Activated naive CD4-positive, alpha-beta T cell treated with anti-CD3 and anti-CD28 coated beads for 36 hours (primary cell): ENCODE measurements at regions of chr3 and their contacts with region 1.

Region 1: GRCh38 chr3:129399145-129399894 is 29.1 kb downstream of the EFCAB12 start:
- DNase-seq: peak; percentile 87
- H3K4me3 Mint-ChIP-seq: peak overlapping the region; percentile 100
- H3K27ac Mint-ChIP-seq: peak overlapping the region; percentile 99
- H3K4me1 Mint-ChIP-seq: peaks cover 31% of the 10 kb centered on the region
- H3K27me3 Mint-ChIP-seq: no peaks in the 10 kb centered on the region

Region 2: GRCh38 chr3:129160891-129161859 is 238.1 kb before region 1 on chr3 and contains the start of gene ISY1:
- CTCF ChIA-PET with region 1: no interaction called
- intact Hi-C with region 1: loop called (anchors 1 kb)
- DNase-seq: peak; percentile 91
- H3K4me3 Mint-ChIP-seq: peak within 1 kb of the TSS; percentile 87
- H3K27ac Mint-ChIP-seq: peak within 1 kb of the TSS; percentile 99
- H3K4me1 Mint-ChIP-seq: peaks cover 31% of the 10 kb centered on the region
- H3K27me3 Mint-ChIP-seq: no peaks in the 10 kb centered on the region
- total RNA-seq, gene ISY1: 56.8 to 65.4 TPM

Region 3: DNA sequence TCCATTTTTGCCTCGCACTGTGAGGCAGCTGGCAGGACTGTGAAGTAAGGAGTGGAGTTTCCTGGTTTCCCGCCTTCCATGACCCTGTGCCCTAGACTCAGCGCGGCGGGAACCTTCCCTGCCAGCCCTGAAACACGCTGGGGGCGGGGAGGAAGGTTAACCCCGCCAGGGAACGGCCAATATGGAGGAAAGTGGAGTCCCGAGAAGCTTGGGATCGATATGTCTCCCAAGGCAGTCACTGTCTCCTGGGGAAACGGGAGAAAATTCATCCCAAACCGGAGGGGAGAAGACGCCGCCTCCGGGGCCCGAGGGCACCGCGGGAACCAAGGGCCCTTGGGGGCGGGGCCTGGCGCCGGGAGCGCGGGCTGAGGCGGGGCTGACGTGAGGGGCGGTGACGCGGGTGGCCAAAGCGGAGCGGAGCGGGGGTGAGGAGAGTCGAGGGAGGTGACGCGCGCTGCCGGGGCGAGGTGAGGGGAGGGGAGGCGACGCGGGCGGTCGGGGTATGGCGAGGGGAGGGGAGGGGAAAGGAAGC is 120.8 kb before region 1 on chr3 and contains the start of gene HMCES:
- CTCF ChIA-PET with region 1: no interaction called
- intact Hi-C with region 1: loop called (anchors 2 kb)
- DNase-seq: peak; percentile 96
- H3K4me3 Mint-ChIP-seq: peak within 1 kb of the TSS; percentile 87
- H3K27ac Mint-ChIP-seq: peak within 1 kb of the TSS; percentile 90
- H3K4me1 Mint-ChIP-seq: peaks cover 48% of the 10 kb centered on the region
- H3K27me3 Mint-ChIP-seq: no peaks in the 10 kb centered on the region
- total RNA-seq, gene HMCES: 35.0 to 35.8 TPM

Region 4: DNA sequence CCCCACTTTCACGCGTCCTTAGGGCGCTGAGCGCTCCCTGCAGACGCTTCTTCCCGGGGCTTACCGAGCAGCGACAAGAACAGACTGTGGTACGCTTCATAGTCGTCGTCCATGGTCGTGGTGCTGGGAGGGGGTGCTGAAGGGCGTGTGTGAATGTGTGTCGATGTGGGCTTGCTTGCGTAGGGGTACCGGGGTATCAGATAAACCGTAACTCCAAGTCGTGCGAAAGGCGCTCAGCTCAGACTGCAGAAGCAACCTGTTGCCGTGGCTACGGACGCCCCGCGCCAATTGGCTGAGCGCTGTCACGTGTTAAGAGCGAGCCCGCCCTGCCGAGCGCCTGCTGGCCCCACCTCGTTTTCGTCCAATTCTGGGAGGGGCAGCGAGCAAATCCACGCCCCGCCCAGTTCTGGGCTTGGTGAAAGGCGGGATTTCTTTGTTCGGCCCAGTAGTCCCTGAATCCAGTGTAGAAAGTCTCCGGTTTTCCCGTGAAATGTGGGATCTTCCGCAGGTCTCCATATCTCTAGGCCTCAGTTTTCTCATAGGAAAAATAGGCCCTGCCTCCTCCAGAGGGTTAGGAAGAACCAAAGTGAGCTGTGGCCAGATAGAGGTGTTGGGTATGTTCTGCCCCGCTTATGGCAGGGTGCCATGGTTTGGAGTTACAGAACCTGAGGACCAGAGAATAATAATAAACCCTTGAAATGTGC is 29.2 kb after region 1 on chr3 and contains the start of gene EFCAB12:
- CTCF ChIA-PET with region 1: interaction called, 7 read pairs
- intact Hi-C with region 1: loop called (anchors 1 kb)
- DNase-seq: peak; percentile 94
- H3K4me3 Mint-ChIP-seq: peak within 1 kb of the TSS; percentile 65
- H3K27ac Mint-ChIP-seq: peak within 1 kb of the TSS; percentile 71
- H3K4me1 Mint-ChIP-seq: peaks cover 45% of the 10 kb centered on the region
- H3K27me3 Mint-ChIP-seq: no peaks in the 10 kb centered on the region
- total RNA-seq, gene EFCAB12: 0.37 to 0.81 TPM

Region 5: GRCh38 chr3:129606636-129607390 is 207.5 kb after region 1 on chr3 and contains the start of gene PLXND1:
- CTCF ChIA-PET with region 1: no interaction called
- intact Hi-C with region 1: loop called (anchors 5 kb)
- DNase-seq: peak; percentile 27
- H3K4me3 Mint-ChIP-seq: peak within 1 kb of the TSS; percentile 77
- H3K27ac Mint-ChIP-seq: peak within 1 kb of the TSS; percentile 6
- H3K4me1 Mint-ChIP-seq: peaks cover 7% of the 10 kb centered on the region
- H3K27me3 Mint-ChIP-seq: peaks cover 19% of the 10 kb centered on the region
- total RNA-seq, gene PLXND1: 5.1 to 6.2 TPM

Region 6: DNA sequence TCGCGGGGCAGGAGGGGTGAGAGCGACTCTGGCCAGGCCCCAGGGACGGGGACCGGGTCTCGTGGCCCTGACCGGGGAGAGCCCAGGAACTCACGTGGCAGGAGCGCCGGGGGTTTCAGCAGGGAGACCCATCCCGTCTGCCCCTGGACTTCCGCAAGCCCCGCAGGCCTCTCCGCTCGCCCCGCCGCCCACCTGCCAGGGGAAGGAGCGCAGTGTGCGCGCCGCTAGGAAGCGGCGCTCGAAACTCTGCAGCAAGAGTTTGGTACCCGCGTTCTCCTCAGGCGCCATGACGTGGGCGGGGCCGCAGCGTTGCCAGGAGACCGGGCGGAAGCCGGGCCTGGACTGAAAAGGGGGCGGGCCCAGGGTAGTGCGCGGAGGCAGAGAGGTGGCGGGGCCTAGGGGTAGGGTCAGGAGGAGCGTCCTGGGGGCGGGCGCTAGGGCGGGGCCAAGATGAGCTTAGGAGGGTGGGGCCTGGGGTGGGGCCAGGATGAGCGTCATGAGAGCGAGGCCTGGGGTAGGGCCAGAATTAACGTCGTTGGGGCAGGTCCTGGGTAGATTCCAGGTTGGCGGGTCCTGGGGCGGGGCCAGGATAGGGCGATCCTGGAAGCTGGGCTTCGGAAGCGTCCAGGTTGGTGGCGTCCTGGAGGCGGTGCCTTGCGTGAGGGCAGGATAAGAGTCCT is 712.0 kb after region 1 on chr3:
- CTCF ChIA-PET with region 1: no interaction called
- intact Hi-C with region 1: loop called (anchors 1 kb)
- DNase-seq: peak; percentile 99
- H3K4me3 Mint-ChIP-seq: peak overlapping the region; percentile 92
- H3K27ac Mint-ChIP-seq: peak overlapping the region; percentile 95
- H3K4me1 Mint-ChIP-seq: peaks cover 18% of the 10 kb centered on the region
- H3K27me3 Mint-ChIP-seq: no peaks in the 10 kb centered on the region